ENCODE measurements at regions of chr17 and their contacts with region 1.

Region 1: DNA sequence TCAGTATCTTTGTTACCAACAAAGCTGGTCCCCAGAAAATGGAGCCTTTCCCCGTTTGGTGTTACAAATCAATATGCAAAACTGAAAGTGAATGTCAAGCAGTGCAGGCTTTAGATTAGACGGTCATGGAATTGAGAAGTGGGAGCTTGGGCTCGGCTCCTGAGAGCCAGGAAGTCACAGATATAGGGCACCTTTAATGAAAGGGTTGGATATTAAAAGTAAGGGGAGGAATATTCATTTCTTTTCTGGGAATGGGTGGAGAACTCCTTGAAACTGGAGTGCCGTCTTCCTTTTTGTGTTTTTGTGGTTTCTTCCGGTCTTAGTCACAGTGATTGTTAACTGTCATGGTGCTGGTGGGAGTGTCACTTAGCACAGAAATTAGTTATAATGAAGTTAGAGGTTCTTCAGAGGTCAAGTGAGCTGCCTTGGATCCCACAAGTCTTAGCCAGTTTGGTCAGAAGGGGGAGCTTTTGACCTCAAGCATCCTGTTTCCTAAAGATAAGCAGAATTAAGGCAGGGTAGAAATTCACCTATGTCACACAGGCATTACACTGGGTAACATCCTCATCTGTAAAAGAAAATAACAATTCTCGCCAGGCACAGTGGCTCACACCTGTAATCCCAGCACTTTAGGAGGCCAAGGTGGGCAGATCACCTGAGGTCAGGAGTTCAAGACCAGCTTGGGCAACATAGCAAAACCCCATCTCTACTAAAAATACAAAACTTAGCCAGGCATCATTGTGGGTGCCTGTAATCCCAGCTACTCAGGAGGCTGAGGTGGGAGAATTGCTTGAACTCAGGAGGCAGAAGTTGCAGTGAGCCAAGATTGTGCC is 9.6 kb upstream of the EIF1 start:
- DNase-seq: peak; percentile 87
- H3K4me3 Mint-ChIP-seq: peak overlapping the region; percentile 83
- H3K27ac Mint-ChIP-seq: peak overlapping the region; percentile 98
- H3K4me1 Mint-ChIP-seq: peaks cover 45% of the 10 kb centered on the region
- H3K27me3 Mint-ChIP-seq: no peaks in the 10 kb centered on the region

Region 2: GRCh38 chr17:40608061-40608588 is 1071.0 kb before region 1 on chr17:
- CTCF ChIA-PET with region 1: no interaction called
- intact Hi-C with region 1: loop called (anchors 5 kb)
- DNase-seq: peak; percentile 64
- H3K4me3 Mint-ChIP-seq: peak overlapping the region; percentile 38
- H3K27ac Mint-ChIP-seq: peak overlapping the region; percentile 73
- H3K4me1 Mint-ChIP-seq: peaks cover 95% of the 10 kb centered on the region
- H3K27me3 Mint-ChIP-seq: no peaks in the 10 kb centered on the region

Region 3: DNA sequence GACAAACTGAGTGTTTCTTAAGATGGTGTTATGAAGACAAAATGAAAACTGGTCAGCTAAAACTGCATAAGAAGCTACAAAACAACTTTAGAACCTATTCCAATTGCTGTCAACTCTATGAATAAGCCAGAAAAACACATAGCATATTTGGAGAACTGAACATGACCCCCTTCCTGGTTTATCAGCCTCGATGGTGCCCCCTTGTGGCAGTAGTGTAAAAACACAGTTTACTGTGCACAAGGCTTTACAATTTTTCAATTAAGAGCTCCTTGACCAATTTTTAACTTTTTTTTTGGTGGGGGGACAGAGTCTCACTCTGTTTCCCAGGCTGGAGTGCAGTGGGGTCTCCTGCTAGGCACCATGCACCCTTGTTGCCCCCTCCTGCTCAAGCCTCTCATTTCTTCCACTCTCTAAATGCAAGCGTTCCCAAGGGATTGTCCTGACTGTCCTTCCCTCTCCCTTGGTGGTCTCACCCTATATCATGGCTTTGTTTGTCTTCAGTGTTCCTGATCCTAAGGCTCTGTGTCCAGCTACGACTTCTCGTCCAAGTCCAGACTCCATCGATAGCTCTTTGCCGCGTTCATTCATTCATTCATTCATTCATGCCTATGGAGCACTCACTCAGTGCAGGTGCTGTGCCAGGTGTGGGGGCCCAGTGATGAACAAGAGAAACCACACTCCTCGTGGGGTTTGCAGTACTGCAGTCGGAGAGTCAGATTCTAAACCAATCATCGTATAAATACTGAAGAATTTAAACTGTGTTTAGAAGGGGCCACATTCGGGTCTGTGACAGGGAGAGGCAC is 17.0 kb after region 1 on chr17:
- CTCF ChIA-PET with region 1: interaction called, 62 read pairs
- intact Hi-C with region 1: loop called (anchors 1 kb)
- DNase-seq: peak; percentile 90
- H3K4me3 Mint-ChIP-seq: no peak overlapping the region
- H3K27ac Mint-ChIP-seq: peak overlapping the region; percentile 63
- H3K4me1 Mint-ChIP-seq: peaks cover 16% of the 10 kb centered on the region
- H3K27me3 Mint-ChIP-seq: no peaks in the 10 kb centered on the region

Region 4: GRCh38 chr17:41754066-41754465 is 74.9 kb after region 1 on chr17:
- CTCF ChIA-PET with region 1: no interaction called
- intact Hi-C with region 1: no loop called
- DNase-seq: no peak
- H3K4me3 Mint-ChIP-seq: no peak overlapping the region
- H3K27ac Mint-ChIP-seq: no peak overlapping the region
- H3K4me1 Mint-ChIP-seq: no peaks in the 10 kb centered on the region
- H3K27me3 Mint-ChIP-seq: no peaks in the 10 kb centered on the region

Region 5: DNA sequence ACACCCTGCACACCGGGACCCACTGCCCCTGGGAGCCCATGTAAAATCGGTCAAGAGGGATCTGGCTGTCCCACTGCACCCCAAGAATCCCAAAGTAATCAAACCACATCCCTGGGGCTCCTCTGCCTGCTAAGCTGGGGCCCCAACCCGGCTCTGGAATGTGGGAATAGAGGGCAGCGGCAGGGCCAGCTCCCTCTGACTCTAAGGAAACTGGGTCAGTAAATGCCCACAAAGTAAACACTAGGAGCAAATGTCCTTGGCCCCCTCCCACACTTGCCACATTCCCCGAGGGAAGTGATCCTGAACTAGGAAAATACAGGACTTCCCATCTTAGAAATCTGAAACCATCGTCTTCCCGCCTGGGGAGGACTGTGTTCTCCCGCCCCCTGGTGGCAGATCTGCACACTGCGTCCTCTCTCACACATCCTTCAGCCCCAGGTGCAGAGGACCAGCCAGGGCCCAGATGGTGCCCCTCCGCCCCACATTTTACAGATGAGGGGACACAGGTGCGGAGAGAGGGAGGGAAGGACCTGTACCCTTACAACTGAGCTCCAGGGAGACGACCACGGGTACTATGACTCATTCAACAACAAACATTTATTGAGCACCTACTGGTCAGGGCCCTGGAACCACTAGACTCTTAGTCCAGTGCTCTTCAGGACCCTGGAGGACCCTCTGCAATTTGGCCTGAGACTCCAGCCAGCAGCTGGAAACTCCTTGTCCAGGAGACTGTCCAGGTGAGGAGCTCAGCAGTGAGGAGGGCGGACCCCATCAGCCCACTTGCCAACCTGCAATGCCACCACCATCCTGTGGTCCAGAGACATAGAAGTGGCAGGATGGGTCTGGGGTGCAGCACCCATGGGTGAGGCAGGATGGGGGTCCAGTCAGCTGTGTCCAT is 122.5 kb after region 1 on chr17:
- CTCF ChIA-PET with region 1: no interaction called
- intact Hi-C with region 1: no loop called
- DNase-seq: peak; percentile 84
- H3K4me3 Mint-ChIP-seq: no peak overlapping the region
- H3K27ac Mint-ChIP-seq: no peak overlapping the region
- H3K4me1 Mint-ChIP-seq: no peaks in the 10 kb centered on the region
- H3K27me3 Mint-ChIP-seq: no peaks in the 10 kb centered on the region

Region 6: DNA sequence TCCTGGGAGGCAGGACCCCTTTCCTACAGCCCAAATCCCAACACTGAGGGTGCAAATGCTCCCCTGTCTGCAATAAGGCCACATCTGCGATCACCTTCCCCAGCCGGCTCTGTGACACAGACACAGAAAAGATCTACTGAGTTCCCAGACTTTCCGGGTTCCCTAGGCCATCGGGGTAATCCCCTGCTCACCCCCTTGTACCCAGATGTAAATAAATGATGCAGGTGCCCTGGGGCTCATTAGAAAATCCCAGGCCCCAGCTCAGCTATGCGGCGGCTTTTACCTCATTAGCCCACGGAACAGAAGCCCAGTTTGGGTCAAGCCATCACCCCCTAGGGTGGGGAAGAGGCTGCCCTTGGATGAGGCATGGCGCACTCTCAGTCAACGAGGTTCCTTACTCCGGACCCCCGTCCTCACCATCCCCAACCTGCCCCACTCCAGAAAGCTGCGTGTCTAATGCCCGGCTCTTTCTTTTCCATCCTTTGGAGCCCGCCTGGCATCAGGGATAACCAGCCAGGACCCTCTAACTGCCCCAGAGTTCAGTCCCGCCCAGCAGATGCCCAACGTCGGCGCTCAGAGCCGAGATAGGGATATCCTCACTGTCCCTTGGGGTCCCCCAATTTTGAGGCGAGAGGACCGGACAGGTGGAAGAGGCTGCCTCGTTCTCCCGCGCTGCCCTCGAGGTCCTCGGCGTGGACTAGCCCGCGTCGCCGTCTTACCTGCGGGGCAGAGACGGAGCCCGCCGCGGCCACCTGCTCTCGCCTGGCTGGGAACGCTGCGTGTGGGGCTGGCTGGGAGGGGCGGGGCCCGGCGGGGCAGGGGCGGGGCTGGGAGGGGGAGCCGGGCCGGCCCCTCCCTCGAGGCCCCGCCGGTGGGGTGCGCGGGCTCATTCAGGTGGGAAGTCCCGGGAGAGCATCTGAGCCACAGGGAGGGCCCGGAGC is 418.8 kb after region 1 on chr17 and contains the start of gene ZNF385C:
- CTCF ChIA-PET with region 1: no interaction called
- intact Hi-C with region 1: no loop called
- DNase-seq: no peak
- H3K4me3 Mint-ChIP-seq: peak within 1 kb of the TSS; percentile 54
- H3K27ac Mint-ChIP-seq: no peak within 1 kb of the TSS
- H3K4me1 Mint-ChIP-seq: peaks cover 9% of the 10 kb centered on the region
- H3K27me3 Mint-ChIP-seq: peaks cover 15% of the 10 kb centered on the region
- total RNA-seq, gene ZNF385C: 0.36 to 0.77 TPM

Measured in activated naive CD4-positive, alpha-beta T cell treated with anti-CD3 and anti-CD28 coated beads for 36 hours (primary cell).